B cell (primary cell): ENCODE measurements at regions of chr4 and their contacts with region 1.

Region 1: GRCh38 chr4:6264225-6264540 is 5.5 kb upstream of the WFS1 start:
- DNase-seq: no peak
- ATAC-seq: no peak
- H3K4me3 ChIP-seq: no peak overlapping the region
- H3K4me3 Mint-ChIP-seq: no peak overlapping the region
- H3K27ac ChIP-seq: no peak overlapping the region
- H3K27ac Mint-ChIP-seq: no peak overlapping the region
- H3K4me1 ChIP-seq: peaks cover 23 to 27% of the 10 kb centered on the region in 2 donors
- H3K4me1 Mint-ChIP-seq: peaks cover 28% of the 10 kb centered on the region
- H3K27me3 ChIP-seq: peaks cover 0 to 6% (median 0%) of the 10 kb centered on the region in 4 experiments
- H3K27me3 Mint-ChIP-seq: peaks cover 9% of the 10 kb centered on the region
- CTCF ChIP-seq: no peak

Region 2: GRCh38 chr4:6327041-6327917 is 63.1 kb after region 1 on chr4:
- CTCF ChIA-PET with region 1: interaction called, 451 read pairs
- POLR2A ChIA-PET with region 1: no interaction called
- intact Hi-C with region 1: no loop called
- DNase-seq: peak; percentile 75
- ATAC-seq: peak; percentile 78
- H3K4me3 ChIP-seq: no peak overlapping the region
- H3K4me3 Mint-ChIP-seq: no peak overlapping the region
- H3K27ac ChIP-seq: no peak overlapping the region
- H3K27ac Mint-ChIP-seq: no peak overlapping the region
- H3K4me1 ChIP-seq: no peaks in the 10 kb centered on the region
- H3K4me1 Mint-ChIP-seq: no peaks in the 10 kb centered on the region
- H3K27me3 ChIP-seq: peaks cover 0 to 35% (median 3%) of the 10 kb centered on the region in 4 experiments
- H3K27me3 Mint-ChIP-seq: peaks cover 29% of the 10 kb centered on the region
- CTCF ChIP-seq: peak; percentile 92